ENCODE measurements at regions of chr3 and their contacts with region 1.

Region 1: DNA sequence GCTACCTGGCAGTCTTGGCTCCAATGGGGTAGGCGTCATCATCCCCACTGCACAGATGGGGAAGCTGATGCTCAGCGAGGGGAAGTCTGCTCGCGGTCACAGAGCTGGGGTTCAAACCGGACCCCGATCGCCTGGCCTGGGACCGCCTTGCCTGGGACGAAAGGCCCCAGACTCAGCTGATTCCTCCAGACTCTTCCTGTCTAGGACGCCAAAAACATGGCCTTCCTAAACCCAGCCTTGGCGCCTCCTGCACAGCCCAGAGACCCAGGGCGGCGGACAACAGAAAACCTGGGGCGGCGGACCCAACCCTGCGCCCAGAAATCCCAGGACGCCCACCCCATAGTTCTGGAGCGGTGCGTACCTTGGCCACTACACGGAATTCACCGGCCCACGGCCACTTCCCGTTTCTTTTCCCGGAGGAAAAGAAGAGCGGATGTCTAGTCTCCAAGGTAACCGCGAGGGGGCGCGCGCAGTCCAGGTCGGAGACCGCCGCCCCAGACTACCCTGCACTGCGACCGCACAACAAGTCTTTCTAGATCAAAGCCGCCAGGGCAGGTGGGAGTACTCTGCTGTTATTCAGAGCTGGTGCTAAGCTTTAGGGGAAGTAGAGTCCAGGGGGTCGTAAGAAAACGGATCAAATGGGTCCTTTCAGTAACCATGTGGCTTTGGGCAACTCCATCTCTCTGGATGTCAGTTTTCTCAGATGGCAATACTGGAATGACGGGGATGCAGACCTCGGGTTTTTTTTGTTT is 4.9 kb upstream of the IL17RD start:
- DNase-seq: peak; percentile 64
- H3K4me3 Mint-ChIP-seq: peak overlapping the region; percentile 52
- H3K27ac Mint-ChIP-seq: no peak overlapping the region
- H3K4me1 Mint-ChIP-seq: peaks cover 8% of the 10 kb centered on the region
- H3K27me3 Mint-ChIP-seq: peaks cover 65% of the 10 kb centered on the region

Region 2: DNA sequence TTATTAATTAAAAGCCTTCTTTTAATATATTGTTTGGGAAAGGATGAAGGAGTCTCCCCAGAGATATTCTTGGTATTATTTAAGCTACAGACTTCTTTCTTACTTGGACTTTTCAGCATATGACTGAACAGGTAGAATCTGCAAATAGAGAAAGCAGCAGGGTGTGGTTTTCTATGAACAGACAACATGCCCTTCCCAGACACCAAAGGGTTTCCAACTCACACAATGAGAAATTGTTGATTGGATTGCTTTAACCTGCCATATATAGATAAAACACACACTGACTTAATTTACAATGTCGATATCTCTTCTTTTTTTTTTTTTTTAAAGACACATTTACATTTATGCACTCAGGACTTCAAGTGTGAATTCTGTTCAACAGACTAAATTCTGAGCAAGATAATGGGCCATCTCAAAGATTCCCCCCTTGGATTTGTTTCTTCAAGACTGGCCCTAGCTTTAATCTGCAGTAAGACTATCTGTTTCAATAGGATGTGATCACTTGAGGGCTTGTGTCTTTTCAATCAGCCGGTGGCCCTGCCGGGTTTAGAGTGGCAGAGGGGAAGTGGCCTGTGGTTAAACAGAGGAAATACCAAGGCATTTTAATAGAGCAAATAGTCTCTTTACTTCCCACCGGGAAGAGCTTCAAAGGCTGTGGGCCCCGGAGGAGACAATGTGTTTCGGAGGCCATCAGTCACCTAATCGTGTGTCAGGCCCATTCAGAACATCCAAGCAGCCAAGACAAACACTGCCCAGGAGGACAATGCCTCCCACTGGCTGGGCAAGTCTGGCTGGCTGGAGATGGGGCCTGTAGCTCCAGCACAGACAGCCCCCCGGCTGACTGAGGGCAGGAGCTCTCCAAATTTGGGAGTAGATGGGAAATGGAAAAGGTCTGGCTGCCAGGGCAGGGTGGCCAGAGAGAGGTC is 11.0 kb before region 1 on chr3:
- CTCF ChIA-PET with region 1: interaction called, 25 read pairs
- POLR2A ChIA-PET with region 1: no interaction called
- DNase-seq: peak; percentile 49
- H3K4me3 Mint-ChIP-seq: no peak overlapping the region
- H3K27ac Mint-ChIP-seq: no peak overlapping the region
- H3K4me1 Mint-ChIP-seq: peaks cover 15% of the 10 kb centered on the region
- H3K27me3 Mint-ChIP-seq: peaks cover 48% of the 10 kb centered on the region

Region 3: DNA sequence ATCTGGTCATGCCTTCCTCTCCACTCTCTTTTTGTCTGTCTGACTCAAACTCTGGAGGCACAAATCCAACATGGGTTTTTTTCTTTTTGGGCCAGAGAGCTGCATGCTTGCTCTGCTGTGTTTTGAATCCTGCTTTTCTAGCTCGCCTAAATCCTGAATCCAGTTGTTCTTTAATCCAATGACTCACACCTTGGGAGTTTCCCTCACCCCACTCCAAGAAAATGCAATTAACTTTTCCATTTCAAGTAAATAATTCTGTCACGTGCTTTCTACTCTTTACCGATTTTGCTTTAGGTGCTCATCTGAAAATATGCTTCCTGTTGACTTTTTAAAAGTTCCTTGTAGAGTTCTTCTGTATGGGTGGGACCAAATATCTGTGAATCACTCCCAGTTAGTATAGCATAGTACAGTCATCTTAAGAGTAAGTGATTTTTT is 633.6 kb after region 1 on chr3:
- CTCF ChIA-PET with region 1: no interaction called
- POLR2A ChIA-PET with region 1: no interaction called
- DNase-seq: no peak
- H3K4me3 Mint-ChIP-seq: peak overlapping the region; percentile 15
- H3K27ac Mint-ChIP-seq: peak overlapping the region; percentile 67
- H3K4me1 Mint-ChIP-seq: peaks cover 46% of the 10 kb centered on the region
- H3K27me3 Mint-ChIP-seq: no peaks in the 10 kb centered on the region

Measured in activated CD4-positive, alpha-beta memory T cell treated with anti-CD3 and anti-CD28 coated beads, Interleukin-2, amount 10 ng/mL, durations not matched to agents 7 days and 5 days (primary cell).